Gastrocnemius medialis (tissue), 4 donors: ENCODE measurements at regions of chr12 and their contacts with region 1.

Region 1: DNA sequence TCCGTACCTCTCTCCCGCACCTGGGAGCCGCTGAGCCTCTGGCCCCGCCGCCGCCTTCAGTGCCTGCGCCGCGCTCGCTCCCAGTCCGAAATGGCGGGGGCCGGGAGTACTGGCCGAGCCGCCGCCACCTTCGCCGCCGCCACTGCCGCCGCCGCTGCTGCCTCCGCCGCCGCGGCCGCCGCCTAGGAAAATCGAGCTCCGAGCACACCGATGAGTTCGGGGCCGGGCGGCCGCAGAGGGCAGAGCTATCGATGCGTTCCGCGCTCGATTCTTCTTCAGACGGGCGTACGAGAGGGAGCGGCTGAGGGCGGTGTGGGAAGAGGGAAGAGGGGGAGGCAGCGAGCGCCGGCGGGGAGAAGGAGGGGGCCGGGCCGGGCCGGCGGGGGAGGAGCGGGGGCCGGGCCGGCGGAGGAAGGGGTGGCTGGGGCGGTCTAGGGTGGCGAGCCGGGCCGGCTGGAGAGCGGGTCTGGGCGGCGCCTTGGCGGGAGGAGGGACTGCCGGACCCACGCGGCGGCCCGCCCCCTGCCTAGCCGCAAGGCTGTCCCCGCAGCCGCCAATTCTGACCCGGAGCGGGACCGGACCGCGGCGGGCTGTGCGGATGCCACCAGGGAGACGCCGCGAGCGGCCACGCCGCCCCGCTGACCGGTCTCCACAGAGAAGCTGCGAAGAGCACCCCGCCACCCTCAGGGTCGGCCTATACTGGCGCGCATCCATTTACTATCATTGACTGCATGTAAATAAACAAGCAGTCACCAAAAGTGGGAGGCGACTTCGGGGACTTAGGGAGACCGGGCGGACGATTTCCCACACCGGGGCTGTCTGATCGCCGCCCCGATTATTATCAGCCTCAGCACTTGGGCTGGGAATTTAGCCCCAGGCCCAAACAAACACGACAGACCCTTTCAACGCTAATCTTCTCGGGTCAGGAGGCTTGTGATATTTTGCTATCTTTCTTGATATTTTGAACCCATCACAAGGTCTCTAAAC is at the start of gene KRAS:
- DNase-seq: peak; percentile 96
- ATAC-seq: peak; percentile 92 to 93
- H3K4me3 ChIP-seq: peak within 1 kb of the TSS; percentile 63 to 93 (median 78)
- H3K27ac ChIP-seq: peak within 1 kb of the TSS; percentile 88 to 97 (median 94)
- H3K4me1 ChIP-seq: peaks cover 10 to 22% of the 10 kb centered on the region in 2 donors
- H3K27me3 ChIP-seq: no peaks in the 10 kb centered on the region
- CTCF ChIP-seq: peak in 1 of 5 experiments; percentile 14
- POLR2A ChIP-seq: peak; percentile 85 to 86
- total RNA-seq, gene KRAS: 7.0 to 9.5 (median 8.0) TPM

Region 2: GRCh38 chr12:25195056-25195971 is 55.7 kb before region 1 on chr12 and contains the starts of genes DNAI7 and ETFRF1:
- in situ Hi-C with region 1: loop called in 2 of 4 experiments (anchors 5 to 10 kb)
- intact Hi-C with region 1: loop called (anchors 2 kb)
- DNase-seq: peak; percentile 93 to 95
- ATAC-seq: peak; percentile 96 to 97
- H3K4me3 ChIP-seq: peak within 1 kb of the TSS; percentile 74 to 97 (median 78)
- H3K27ac ChIP-seq: peak within 1 kb of the TSS; percentile 90 to 97 (median 92)
- H3K4me1 ChIP-seq: peaks cover 18 to 27% of the 10 kb centered on the region in 2 donors
- H3K27me3 ChIP-seq: no peaks in the 10 kb centered on the region
- CTCF ChIP-seq: no peak
- POLR2A ChIP-seq: peak; percentile 78 to 91
- total RNA-seq, gene DNAI7: not detected
- total RNA-seq, gene ETFRF1: 45.9 to 105 (median 74.6) TPM

Region 3: GRCh38 chr12:25200703-25201102 is 50.3 kb before region 1 on chr12:
- in situ Hi-C with region 1: loop called in 2 of 4 experiments (anchors 5 to 10 kb)
- intact Hi-C with region 1: loop called (anchors 2 kb)
- DNase-seq: no peak
- ATAC-seq: no peak
- H3K4me3 ChIP-seq: no peak overlapping the region
- H3K27ac ChIP-seq: no peak overlapping the region
- H3K4me1 ChIP-seq: peaks cover 16 to 23% of the 10 kb centered on the region in 2 donors
- H3K27me3 ChIP-seq: no peaks in the 10 kb centered on the region
- CTCF ChIP-seq: no peak
- POLR2A ChIP-seq: no peak

Region 4: GRCh38 chr12:25332143-25332542 is 81.1 kb after region 1 on chr12:
- in situ Hi-C with region 1: no loop called
- intact Hi-C with region 1: loop called (anchors 2 kb)
- DNase-seq: no peak
- ATAC-seq: no peak
- H3K4me3 ChIP-seq: no peak overlapping the region
- H3K27ac ChIP-seq: no peak overlapping the region
- H3K4me1 ChIP-seq: peaks cover 13% of the 10 kb centered on the region in 2 donors
- H3K27me3 ChIP-seq: no peaks in the 10 kb centered on the region
- CTCF ChIP-seq: no peak
- POLR2A ChIP-seq: no peak

Region 5: GRCh38 chr12:26113853-26114719 is 863.0 kb after region 1 on chr12:
- in situ Hi-C with region 1: no loop called
- intact Hi-C with region 1: loop called (anchors 10 kb)
- DNase-seq: peak; percentile 94 to 98
- ATAC-seq: peak; percentile 53 to 63
- H3K4me3 ChIP-seq: peak overlapping the region; percentile 46 to 61 (median 50)
- H3K27ac ChIP-seq: peak overlapping the region; percentile 95 to 100 (median 97)
- H3K4me1 ChIP-seq: peaks cover 80 to 84% of the 10 kb centered on the region in 2 donors
- H3K27me3 ChIP-seq: no peaks in the 10 kb centered on the region
- CTCF ChIP-seq: peak; percentile 11 to 53 (median 38)
- POLR2A ChIP-seq: peak; percentile 89 to 96